Activated CD8-positive, alpha-beta memory T cell treated with anti-CD3 and anti-CD28 coated beads, Interleukin-2, amount 10 ng/mL, durations not matched to agents 7 days and 5 days (primary cell): ENCODE measurements at regions of chr3 and their contacts with region 1.

Region 1: DNA sequence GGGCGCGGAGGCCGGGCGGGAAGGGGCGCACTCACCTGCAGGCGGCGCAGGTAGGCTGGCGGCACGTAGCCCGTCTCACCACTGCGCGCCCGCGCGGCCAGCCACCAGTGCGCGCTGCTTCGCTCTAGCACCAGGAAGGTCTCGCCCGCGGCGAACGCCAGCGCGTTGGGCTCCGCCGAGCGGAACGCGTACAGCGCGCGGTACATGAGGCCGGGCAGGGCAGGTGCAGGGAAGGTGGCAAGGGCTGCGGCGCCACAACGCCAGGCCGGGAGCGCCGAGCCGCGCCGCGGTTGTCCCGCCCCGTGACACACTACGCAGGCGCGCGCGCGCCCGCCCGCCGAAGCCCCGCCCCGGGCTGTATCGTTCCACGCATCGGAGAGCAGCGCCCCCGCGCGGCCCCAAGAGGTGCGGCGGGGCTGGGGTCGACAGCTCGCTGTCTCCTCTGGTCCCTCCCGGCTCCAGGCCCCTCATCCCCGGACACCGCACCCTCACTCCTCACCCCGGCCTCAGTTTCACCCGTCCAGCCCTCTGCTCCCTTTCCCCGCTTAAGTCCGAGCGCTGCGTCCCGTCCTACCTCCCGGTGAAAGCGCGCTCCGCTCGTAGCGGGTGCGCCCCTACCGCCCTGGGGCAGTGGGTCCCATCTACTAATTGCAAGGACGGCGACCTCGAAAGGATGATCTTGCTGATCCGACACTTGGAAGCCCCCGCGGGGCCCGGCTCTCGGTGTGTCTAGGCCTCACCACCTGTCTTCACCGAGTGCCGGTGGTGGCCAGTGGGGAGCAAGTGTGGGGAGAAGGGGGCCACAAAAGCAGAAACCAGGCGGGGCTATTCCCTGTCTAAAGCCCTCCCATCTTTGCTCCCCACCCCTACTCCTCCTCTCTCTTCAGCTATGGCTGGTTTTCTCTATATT is at the start of gene NCKIPSD:
- DNase-seq: peak; percentile 91
- ATAC-seq: peak; percentile 91
- H3K4me3 Mint-ChIP-seq: peak within 1 kb of the TSS; percentile 90
- H3K27ac Mint-ChIP-seq: peak within 1 kb of the TSS; percentile 83
- H3K4me1 Mint-ChIP-seq: peaks cover 23% of the 10 kb centered on the region
- H3K27me3 Mint-ChIP-seq: no peaks in the 10 kb centered on the region
- total RNA-seq, gene NCKIPSD: 33.4 to 43.0 TPM

Region 2: DNA sequence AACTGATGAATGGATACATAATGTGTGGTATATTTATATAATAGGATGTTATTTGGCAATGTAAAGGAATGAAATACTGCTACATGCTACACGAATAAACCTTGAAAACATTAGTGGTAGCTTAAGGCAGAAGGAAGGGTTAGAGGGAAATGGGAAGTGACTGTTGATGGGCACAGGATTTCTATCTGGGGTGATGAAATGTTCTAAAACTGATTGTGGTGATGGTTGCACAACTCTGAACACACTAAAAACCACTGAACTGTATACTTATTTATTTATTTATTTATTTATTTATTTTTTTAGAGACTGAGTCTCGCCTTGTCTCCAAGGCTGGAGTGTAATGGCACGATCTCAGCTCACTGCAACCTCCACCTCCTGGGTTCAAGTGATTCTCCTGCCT is 157.1 kb before region 1 on chr3:
- CTCF ChIA-PET with region 1: no interaction called
- DNase-seq: no peak
- ATAC-seq: no peak
- H3K4me3 Mint-ChIP-seq: no peak overlapping the region
- H3K27ac Mint-ChIP-seq: no peak overlapping the region
- H3K4me1 Mint-ChIP-seq: no peaks in the 10 kb centered on the region
- H3K27me3 Mint-ChIP-seq: no peaks in the 10 kb centered on the region

Region 3: GRCh38 chr3:48663415-48664312 is 22.2 kb before region 1 on chr3:
- CTCF ChIA-PET with region 1: interaction called, 14 read pairs
- DNase-seq: peak; percentile 98
- ATAC-seq: peak; percentile 92
- H3K4me3 Mint-ChIP-seq: peak overlapping the region; percentile 89
- H3K27ac Mint-ChIP-seq: peak overlapping the region; percentile 93
- H3K4me1 Mint-ChIP-seq: peaks cover 19% of the 10 kb centered on the region
- H3K27me3 Mint-ChIP-seq: peaks cover 14% of the 10 kb centered on the region

Region 4: GRCh38 chr3:48708481-48708889 is 22.6 kb after region 1 on chr3:
- CTCF ChIA-PET with region 1: interaction called, 13 read pairs
- DNase-seq: no peak
- ATAC-seq: no peak
- H3K4me3 Mint-ChIP-seq: no peak overlapping the region
- H3K27ac Mint-ChIP-seq: peak overlapping the region; percentile 37
- H3K4me1 Mint-ChIP-seq: peaks cover 39% of the 10 kb centered on the region
- H3K27me3 Mint-ChIP-seq: no peaks in the 10 kb centered on the region

Region 5: DNA sequence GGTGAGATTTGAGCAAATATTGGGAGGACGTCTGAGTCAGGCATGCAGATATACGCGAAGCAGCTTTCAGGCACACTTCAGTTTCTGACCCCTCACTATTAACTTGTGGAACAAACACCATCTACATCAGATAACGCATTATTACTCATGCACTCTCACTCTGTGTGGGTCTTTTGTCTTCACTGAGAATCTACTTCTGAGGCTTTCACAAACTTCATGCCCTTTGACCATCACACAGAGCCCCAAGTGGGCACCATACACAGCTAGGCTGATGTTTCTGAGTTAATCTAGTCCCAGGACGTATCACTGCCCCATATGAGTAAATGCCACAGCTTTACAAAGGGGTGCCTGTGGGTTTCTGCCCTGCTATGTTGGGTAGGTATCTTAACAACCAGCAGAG is 70.8 kb after region 1 on chr3:
- CTCF ChIA-PET with region 1: no interaction called
- DNase-seq: no peak
- ATAC-seq: peak; percentile 30
- H3K4me3 Mint-ChIP-seq: no peak overlapping the region
- H3K27ac Mint-ChIP-seq: no peak overlapping the region
- H3K4me1 Mint-ChIP-seq: no peaks in the 10 kb centered on the region
- H3K27me3 Mint-ChIP-seq: no peaks in the 10 kb centered on the region